Activated CD4-positive, alpha-beta memory T cell treated with anti-CD3 and anti-CD28 coated beads, Interleukin-2, amount 10 ng/mL, durations not matched to agents 7 days and 5 days (primary cell): ENCODE measurements at regions of chr2 and their contacts with region 1.

Region 1: GRCh38 chr2:218710687-218711549 is at the start of gene TTLL4:
- DNase-seq: peak; percentile 98
- H3K4me3 Mint-ChIP-seq: peak within 1 kb of the TSS; percentile 93
- H3K27ac Mint-ChIP-seq: peak within 1 kb of the TSS; percentile 79
- H3K4me1 Mint-ChIP-seq: peaks cover 62% of the 10 kb centered on the region
- H3K27me3 Mint-ChIP-seq: no peaks in the 10 kb centered on the region
- total RNA-seq, gene TTLL4: 27.6 to 29.2 TPM

Region 2: DNA sequence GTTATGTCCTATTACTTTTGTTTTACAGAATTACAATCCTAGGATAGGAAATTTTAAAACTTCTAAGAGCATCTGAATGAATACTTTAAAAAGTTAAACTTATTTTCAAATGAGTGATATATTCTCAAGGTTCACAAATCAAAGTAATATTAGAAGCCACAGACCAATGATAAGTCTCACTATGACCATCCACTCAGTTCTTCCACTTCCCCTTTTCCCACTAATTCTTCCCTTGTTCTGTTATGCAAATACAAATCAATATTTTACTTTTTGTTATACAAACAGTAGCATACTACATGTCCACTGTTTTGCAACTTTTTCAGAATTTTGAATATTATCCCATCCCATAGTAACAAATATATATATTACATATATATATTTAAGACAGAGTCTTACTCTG is 162.9 kb before region 1 on chr2:
- CTCF ChIA-PET with region 1: no interaction called
- POLR2A ChIA-PET with region 1: no interaction called
- DNase-seq: no peak
- H3K4me3 Mint-ChIP-seq: no peak overlapping the region
- H3K27ac Mint-ChIP-seq: no peak overlapping the region
- H3K4me1 Mint-ChIP-seq: no peaks in the 10 kb centered on the region
- H3K27me3 Mint-ChIP-seq: no peaks in the 10 kb centered on the region

Region 3: DNA sequence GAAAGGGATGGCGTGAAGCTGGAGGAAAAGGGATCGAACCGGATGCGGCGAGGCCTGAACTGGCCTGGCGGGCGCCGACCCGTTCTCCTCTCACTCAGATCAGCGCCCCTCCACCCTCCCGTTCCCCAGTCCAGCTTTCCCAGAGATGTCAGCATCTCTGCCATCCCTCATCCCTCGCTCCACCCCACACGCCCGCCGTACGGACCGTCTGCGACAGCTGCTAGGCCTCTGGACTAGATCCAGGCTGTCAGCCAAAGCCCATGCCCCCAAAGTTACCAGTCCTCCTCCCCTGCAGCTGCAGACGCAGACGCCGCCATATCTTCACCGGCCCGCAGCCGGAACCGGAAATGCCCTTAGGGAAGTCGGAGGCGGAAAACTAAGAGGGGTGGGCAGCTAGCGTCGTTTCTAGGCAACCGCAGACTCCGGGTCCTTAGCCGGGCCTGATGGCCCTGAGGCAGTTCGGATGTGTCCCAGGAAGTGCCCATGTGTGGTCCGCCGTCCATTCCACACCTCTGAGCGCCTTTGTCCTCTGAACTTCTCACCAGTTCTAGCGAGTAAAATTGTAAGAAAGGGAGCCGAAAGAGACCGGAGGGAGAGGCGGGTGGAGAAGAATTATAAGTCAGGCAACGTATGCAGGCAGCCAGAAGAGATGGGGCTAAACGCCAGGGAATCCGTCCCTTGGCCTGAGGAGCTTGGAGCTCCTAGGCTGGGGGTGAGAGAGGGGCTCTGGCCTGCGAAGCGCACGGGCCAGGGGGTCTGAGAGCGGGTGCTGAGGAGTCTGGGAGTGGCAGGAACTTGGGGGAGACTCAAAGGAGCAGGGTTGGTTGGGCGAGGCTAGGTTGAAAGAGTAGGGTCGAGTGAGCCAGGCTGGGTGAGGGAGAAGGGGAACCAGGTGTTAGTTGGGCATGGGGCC is 39.0 kb before region 1 on chr2 and contains the starts of genes RNF25 and STK36:
- CTCF ChIA-PET with region 1: interaction called, 6 read pairs
- POLR2A ChIA-PET with region 1: interaction called, 10 read pairs
- DNase-seq: peak; percentile 85
- H3K4me3 Mint-ChIP-seq: peak within 1 kb of the TSS; percentile 97
- H3K27ac Mint-ChIP-seq: peak within 1 kb of the TSS; percentile 88
- H3K4me1 Mint-ChIP-seq: peaks cover 27% of the 10 kb centered on the region
- H3K27me3 Mint-ChIP-seq: no peaks in the 10 kb centered on the region
- total RNA-seq, gene RNF25: 15.1 to 21.9 TPM
- total RNA-seq, gene STK36: 17.6 to 17.9 TPM

Region 4: DNA sequence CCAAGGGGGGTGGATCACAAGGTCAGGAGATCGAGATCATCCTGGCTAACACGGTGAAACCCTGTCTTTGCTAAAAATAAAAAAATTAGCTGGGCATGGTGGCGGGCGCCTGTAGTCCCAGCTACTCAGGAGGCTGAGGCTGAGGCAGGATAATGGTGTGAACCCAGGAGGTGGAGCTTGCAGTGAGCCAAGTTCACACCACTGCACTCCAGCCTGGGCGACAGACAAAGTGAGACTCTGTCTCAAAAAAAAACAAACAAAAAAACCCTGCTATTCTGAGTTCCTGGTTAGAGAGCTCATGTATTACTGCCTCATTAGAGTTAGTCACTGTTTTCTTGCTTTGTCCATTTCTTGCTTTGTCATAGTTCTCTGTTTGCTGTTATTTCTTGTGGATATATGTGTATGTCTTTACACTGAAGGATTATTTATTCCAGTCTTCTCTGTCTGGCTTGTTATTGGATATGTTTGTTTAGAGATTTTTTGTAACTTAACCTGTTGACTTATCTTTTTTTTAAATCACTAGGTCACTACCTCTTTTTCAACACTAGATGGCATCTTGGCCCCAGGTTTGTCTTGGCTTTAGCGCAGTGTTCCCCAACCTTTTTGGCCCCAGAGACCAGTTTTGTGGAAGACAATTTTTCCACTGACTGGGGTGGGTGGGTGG is 16.7 kb after region 1 on chr2:
- CTCF ChIA-PET with region 1: interaction called, 23 read pairs
- POLR2A ChIA-PET with region 1: interaction called, 7 read pairs
- DNase-seq: no peak
- H3K4me3 Mint-ChIP-seq: no peak overlapping the region
- H3K27ac Mint-ChIP-seq: no peak overlapping the region
- H3K4me1 Mint-ChIP-seq: peaks cover 21% of the 10 kb centered on the region
- H3K27me3 Mint-ChIP-seq: no peaks in the 10 kb centered on the region

Region 5: DNA sequence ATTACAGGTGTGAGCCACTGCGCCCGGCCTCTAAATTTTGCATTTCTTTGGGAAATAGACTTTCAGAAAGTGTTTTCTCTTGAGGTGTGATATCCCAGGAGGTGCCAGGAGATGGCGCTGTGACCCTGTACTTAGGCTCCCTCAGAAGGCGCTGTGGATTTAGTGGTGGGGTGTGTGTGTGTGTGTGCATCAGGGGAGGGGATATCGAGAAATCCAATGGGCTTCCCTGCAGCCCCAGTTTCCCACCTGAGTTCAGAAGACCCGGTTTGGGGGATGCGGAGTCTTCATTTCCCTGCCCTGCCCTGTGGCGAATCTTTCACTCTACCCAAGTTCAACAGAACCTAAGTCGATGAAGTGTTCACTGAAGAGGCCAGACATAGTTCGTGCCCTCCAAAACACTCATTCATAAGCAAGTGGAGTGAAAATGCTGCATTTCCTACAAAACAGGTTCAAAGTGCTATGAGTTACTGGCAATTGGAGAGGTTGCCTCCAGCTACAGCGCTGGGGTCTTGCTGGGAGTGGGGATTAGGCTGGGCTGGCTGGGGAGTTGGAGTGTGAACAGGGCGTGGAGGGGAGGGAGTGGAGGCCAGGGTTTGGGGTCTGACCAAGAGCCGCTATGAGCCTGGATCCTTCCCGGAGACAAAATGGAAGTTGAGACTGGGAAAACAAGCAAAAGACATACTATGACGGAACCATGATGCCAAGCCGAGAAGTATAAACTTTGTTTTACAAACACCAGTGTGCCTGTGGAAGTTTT is 142.2 kb after region 1 on chr2:
- CTCF ChIA-PET with region 1: interaction called, 13 read pairs
- POLR2A ChIA-PET with region 1: no interaction called
- DNase-seq: peak; percentile 65
- H3K4me3 Mint-ChIP-seq: no peak overlapping the region
- H3K27ac Mint-ChIP-seq: no peak overlapping the region
- H3K4me1 Mint-ChIP-seq: no peaks in the 10 kb centered on the region
- H3K27me3 Mint-ChIP-seq: peaks cover 55% of the 10 kb centered on the region